ENCODE measurements at regions of chr10 and their contacts with region 1.

Region 1: DNA sequence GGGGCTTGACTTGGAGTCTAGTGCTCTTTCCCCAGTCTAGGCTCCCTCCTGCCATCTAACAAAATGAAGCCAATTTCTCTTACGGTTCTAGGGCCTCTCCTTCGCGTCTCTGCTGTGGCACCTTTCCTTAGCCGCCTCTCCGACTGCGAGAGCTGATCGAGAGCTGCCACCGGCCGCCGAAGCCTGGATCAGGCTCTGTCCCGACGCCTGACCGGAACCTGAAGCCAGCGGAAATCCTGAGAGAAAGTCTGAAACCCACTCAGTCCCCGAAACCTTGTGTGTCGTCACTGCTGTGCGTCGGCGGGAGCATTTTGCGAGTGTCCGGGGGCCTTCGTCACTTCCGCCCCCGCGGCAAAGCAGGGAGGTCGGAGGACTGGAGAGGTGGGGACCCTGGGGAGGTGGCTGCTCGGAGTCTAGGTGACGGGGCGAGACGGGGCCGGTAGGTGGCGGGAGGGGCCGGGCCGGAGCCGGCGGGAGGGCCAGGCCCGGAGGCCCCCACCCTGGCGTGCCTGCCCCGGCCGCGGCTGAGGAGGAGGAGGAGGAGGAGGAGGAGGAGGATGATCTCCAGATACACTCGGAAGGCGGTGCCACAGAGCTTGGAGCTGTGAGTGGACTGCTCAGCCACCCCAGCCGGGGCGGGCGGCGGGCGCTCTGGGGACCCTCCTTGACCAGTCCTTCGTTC is at the starts of genes ECD and FAM149B1:
- DNase-seq: peak; percentile 94
- H3K4me3 Mint-ChIP-seq: peak within 1 kb of the TSS; percentile 100
- H3K27ac Mint-ChIP-seq: peak within 1 kb of the TSS; percentile 100
- H3K4me1 Mint-ChIP-seq: peaks cover 37% of the 10 kb centered on the region
- H3K27me3 Mint-ChIP-seq: no peaks in the 10 kb centered on the region
- total RNA-seq, gene ECD: 30.5 to 31.7 TPM
- total RNA-seq, gene FAM149B1: 15.2 to 17.0 TPM

Region 2: GRCh38 chr10:73182568-73182967 is 14.6 kb after region 1 on chr10:
- CTCF ChIA-PET with region 1: interaction called, 11 read pairs
- POLR2A ChIA-PET with region 1: no interaction called
- DNase-seq: no peak
- H3K4me3 Mint-ChIP-seq: no peak overlapping the region
- H3K27ac Mint-ChIP-seq: no peak overlapping the region
- H3K4me1 Mint-ChIP-seq: no peaks in the 10 kb centered on the region
- H3K27me3 Mint-ChIP-seq: no peaks in the 10 kb centered on the region

Measured in activated CD4-positive, alpha-beta T cell treated with anti-CD3 and anti-CD28 coated beads, Interleukin-2, amount 10 ng/mL, durations not matched to agents 7 days and 5 days (primary cell).